Breast epithelium (tissue), 4 donors: ENCODE measurements at regions of chr6 and their contacts with region 1.

Region 1: DNA sequence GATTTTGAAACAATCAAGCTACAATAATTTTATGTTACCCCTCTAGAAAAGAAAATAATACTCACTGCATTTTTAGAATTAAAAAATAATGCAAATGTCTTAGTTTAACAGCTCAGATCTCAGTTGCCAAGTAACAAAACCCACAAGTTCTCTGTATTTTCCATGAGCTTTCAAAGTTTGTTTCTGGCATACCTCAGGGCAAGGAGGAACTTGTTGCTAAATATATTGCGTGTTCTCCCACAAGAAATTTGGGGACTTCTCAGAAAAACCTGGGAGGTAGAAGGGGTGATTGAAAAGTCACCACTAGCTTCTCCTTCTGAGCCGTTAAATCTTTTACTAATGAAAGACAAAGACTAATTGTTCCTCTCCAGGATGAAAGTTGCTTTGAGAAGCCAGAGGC is 236.8 kb upstream of the MARCKS start:
- DNase-seq: no peak
- H3K4me3 ChIP-seq: no peak overlapping the region
- H3K27ac ChIP-seq: peak overlapping the region; percentile 41 to 64
- H3K4me1 ChIP-seq: no peaks in the 10 kb centered on the region
- H3K27me3 ChIP-seq: no peaks in the 10 kb centered on the region
- CTCF ChIP-seq: no peak
- POLR2A ChIP-seq: no peak

Region 2: GRCh38 chr6:112539355-112539754 is 1081.0 kb before region 1 on chr6:
- intact Hi-C with region 1: loop called (anchors 5 kb)
- DNase-seq: no peak
- H3K4me3 ChIP-seq: no peak overlapping the region
- H3K27ac ChIP-seq: no peak overlapping the region
- H3K4me1 ChIP-seq: no peaks in the 10 kb centered on the region
- H3K27me3 ChIP-seq: no peaks in the 10 kb centered on the region
- CTCF ChIP-seq: no peak
- POLR2A ChIP-seq: no peak

Region 3: GRCh38 chr6:113662688-113663333 is 42.4 kb after region 1 on chr6:
- intact Hi-C with region 1: loop called (anchors 2 kb)
- DNase-seq: no peak
- H3K4me3 ChIP-seq: no peak overlapping the region
- H3K27ac ChIP-seq: no peak overlapping the region
- H3K4me1 ChIP-seq: no peaks in the 10 kb centered on the region
- H3K27me3 ChIP-seq: no peaks in the 10 kb centered on the region
- CTCF ChIP-seq: no peak
- POLR2A ChIP-seq: no peak

Region 4: DNA sequence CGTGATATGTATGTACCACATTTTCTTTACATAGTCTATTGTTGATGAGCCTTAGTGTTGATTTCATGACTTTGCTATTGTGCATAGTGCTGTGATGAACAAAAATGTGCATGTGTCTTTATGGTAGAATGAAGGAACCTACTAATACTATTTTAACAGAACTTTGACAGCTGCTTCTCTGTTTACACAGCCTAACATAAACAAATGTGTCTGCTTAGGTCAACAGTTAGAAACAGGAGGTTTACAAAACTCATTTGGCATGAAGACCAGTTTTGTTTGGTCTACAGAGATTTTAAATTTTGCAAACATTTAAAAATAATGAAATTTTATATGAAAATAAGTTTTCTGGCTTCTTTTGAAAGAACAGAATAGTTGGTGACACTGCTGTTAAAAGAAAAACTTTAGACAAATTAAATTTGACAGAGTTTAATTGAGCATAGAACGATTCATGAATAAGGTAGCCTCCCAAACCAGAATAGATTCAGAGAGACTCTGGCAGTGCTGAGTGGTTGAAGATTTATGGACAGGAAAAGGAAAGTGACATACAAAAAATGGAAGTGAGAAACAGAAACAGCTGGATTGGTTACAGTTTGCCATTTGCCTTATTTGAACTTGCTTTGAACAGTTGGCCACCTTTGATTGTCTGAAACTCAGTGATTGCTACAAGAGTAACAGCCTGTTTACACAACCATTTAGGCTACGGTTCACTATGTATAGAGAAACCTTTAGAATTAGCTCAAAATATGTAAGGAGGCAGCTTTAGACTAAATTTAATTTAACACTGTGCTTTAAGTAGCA is 1438.2 kb after region 1 on chr6:
- intact Hi-C with region 1: no loop called
- DNase-seq: no peak
- H3K4me3 ChIP-seq: no peak overlapping the region
- H3K27ac ChIP-seq: no peak overlapping the region
- H3K4me1 ChIP-seq: no peaks in the 10 kb centered on the region
- H3K27me3 ChIP-seq: no peaks in the 10 kb centered on the region
- CTCF ChIP-seq: no peak
- POLR2A ChIP-seq: no peak